ENCODE measurements at regions of chr15 and their contacts with region 1.

Region 1: GRCh38 chr15:77695961-77696582 is 63.4 kb upstream of the LINGO1 start:
- DNase-seq: no peak
- H3K4me3 ChIP-seq: no peak overlapping the region
- H3K27ac ChIP-seq: no peak overlapping the region
- H3K4me1 ChIP-seq: no peaks in the 10 kb centered on the region
- H3K27me3 ChIP-seq: peaks cover 0 to 55% of the 10 kb centered on the region in 2 donors
- CTCF ChIP-seq: no peak
- POLR2A ChIP-seq: no peak

Region 2: DNA sequence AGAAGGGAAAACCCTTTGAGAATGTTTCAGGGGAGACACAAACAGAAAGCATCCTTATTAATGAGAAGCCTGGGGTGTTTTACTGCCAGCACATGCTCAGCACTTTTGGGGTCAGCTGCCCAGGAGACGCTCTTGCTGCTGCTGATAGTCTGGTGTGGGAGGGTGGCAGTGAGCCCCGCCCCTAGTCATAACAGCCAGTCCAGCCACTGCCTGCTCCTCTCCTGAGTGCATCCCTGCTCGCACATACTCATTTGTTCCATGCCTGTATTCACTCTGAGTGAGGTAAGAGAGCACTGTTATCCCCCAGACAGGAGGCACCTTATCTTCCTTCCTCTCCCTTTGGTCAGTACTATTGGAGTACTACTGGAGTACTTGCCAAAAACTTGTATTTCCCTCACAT is 1486.1 kb before region 1 on chr15:
- intact Hi-C with region 1: loop called (anchors 5 kb)
- DNase-seq: no peak
- H3K4me3 ChIP-seq: no peak overlapping the region
- H3K27ac ChIP-seq: no peak overlapping the region
- H3K4me1 ChIP-seq: no peaks in the 10 kb centered on the region
- H3K27me3 ChIP-seq: no peaks in the 10 kb centered on the region
- CTCF ChIP-seq: no peak
- POLR2A ChIP-seq: no peak

Region 3: GRCh38 chr15:77665530-77666295 is 30.4 kb before region 1 on chr15:
- intact Hi-C with region 1: loop called (anchors 1 kb)
- DNase-seq: no peak
- H3K4me3 ChIP-seq: no peak overlapping the region
- H3K27ac ChIP-seq: no peak overlapping the region
- H3K4me1 ChIP-seq: no peaks in the 10 kb centered on the region
- H3K27me3 ChIP-seq: peaks cover 0 to 20% of the 10 kb centered on the region in 2 donors
- CTCF ChIP-seq: no peak
- POLR2A ChIP-seq: no peak

Measured in breast epithelium (tissue), 4 donors.